ENCODE measurements at regions of chr11 and their contacts with region 1.

Region 1: DNA sequence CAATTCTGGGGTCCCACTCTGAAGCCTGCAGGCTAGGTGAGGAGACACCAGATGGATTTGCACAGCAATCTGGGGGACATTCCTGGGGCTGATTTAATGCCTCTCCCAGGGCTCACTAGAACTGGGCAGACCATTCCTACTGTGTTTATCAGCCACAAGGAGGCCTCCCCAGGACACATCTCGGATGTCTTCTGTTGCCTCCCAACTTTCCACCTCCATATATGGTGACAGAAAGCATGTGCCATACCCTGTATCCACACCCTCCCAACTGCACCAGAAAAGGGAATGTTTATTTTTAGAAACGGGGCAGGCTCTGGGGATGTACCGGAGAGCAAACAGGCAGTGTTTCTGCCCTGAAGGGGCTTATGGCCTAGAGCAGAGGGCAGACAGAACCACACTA is 181.8 kb downstream of the CSNK2A3 start:
- DNase-seq: no peak
- ATAC-seq: no peak
- H3K4me3 ChIP-seq: no peak overlapping the region
- H3K4me3 Mint-ChIP-seq: no peak overlapping the region
- H3K27ac ChIP-seq: no peak overlapping the region
- H3K27ac Mint-ChIP-seq: no peak overlapping the region
- H3K4me1 ChIP-seq: no peaks in the 10 kb centered on the region
- H3K4me1 Mint-ChIP-seq: no peaks in the 10 kb centered on the region
- H3K27me3 ChIP-seq: no peaks in the 10 kb centered on the region
- H3K27me3 Mint-ChIP-seq: peaks cover 10% of the 10 kb centered on the region
- CTCF ChIP-seq: no peak

Region 2: GRCh38 chr11:11189506-11189905 is 18.2 kb after region 1 on chr11:
- CTCF ChIA-PET with region 1: no interaction called
- POLR2A ChIA-PET with region 1: no interaction called
- intact Hi-C with region 1: no loop called
- DNase-seq: no peak
- ATAC-seq: no peak
- H3K4me3 ChIP-seq: no peak overlapping the region
- H3K4me3 Mint-ChIP-seq: no peak overlapping the region
- H3K27ac ChIP-seq: no peak overlapping the region
- H3K27ac Mint-ChIP-seq: no peak overlapping the region
- H3K4me1 ChIP-seq: no peaks in the 10 kb centered on the region
- H3K4me1 Mint-ChIP-seq: peaks cover 5% of the 10 kb centered on the region
- H3K27me3 ChIP-seq: peaks cover 0 to 3% (median 0%) of the 10 kb centered on the region in 4 experiments
- H3K27me3 Mint-ChIP-seq: peaks cover 5% of the 10 kb centered on the region
- CTCF ChIP-seq: no peak

Region 3: DNA sequence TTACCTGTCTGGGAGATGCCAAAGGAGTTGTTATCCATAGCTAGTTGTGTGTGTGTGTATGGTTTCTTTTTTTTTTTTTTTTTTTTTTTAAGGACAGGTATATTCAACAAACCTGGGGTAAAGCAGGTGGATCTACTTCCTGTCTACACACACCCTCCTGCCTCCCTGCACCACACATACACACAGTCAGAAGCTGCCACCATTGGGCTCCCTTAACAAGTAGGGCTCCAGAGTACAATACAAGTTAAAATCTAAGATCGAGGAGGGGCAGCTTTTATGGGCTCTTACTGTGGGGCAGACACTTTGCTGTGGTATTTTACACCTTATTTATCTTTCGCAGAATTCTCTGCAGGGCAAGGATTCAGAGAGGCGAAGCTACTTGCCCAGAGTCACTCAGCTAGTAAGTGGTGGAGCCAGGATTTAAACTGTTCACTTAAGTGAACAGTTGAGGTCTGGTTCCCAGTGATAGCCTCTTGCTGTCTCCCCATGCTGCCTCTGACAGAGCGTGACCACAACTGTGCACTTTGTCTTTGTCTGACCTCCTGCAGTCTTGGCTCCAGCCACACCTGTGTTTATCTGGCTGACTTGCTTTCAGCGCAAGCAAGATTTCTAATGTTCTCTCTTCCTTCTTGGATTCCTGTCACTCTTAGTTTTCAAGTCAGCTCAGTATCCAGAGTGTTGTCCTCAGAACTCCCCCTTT is 46.8 kb after region 1 on chr11:
- CTCF ChIA-PET with region 1: no interaction called
- POLR2A ChIA-PET with region 1: interaction called, 10 read pairs
- intact Hi-C with region 1: no loop called
- DNase-seq: no peak
- ATAC-seq: no peak
- H3K4me3 ChIP-seq: no peak overlapping the region
- H3K4me3 Mint-ChIP-seq: no peak overlapping the region
- H3K27ac ChIP-seq: no peak overlapping the region
- H3K27ac Mint-ChIP-seq: no peak overlapping the region
- H3K4me1 ChIP-seq: no peaks in the 10 kb centered on the region
- H3K4me1 Mint-ChIP-seq: no peaks in the 10 kb centered on the region
- H3K27me3 ChIP-seq: peaks cover 0 to 3% (median under 1%) of the 10 kb centered on the region in 4 experiments
- H3K27me3 Mint-ChIP-seq: peaks cover 6% of the 10 kb centered on the region
- CTCF ChIP-seq: no peak

Measured in B cell (primary cell).